MCF 10A (cell line): ENCODE measurements at regions of chr9 and their contacts with region 1.

Region 1: GRCh38 chr9:86098824-86099700 is at the start of gene GOLM1:
- DNase-seq: peak; percentile 56
- H3K4me3 Mint-ChIP-seq: peak within 1 kb of the TSS; percentile 82
- H3K27ac Mint-ChIP-seq: peak within 1 kb of the TSS; percentile 77
- H3K4me1 Mint-ChIP-seq: peaks cover 14% of the 10 kb centered on the region
- H3K27me3 Mint-ChIP-seq: no peaks in the 10 kb centered on the region
- CTCF ChIP-seq: no peak
- total RNA-seq, gene GOLM1: 32.7 and 33.9 TPM in 2 replicates

Region 2: GRCh38 chr9:86126998-86127972 is 28.2 kb after region 1 on chr9:
- CTCF ChIA-PET with region 1: interaction called, 6 read pairs
- POLR2A ChIA-PET with region 1: interaction called, 26 read pairs
- intact Hi-C with region 1: no loop called
- DNase-seq: peak; percentile 97
- H3K4me3 Mint-ChIP-seq: no peak overlapping the region
- H3K27ac Mint-ChIP-seq: peak overlapping the region; percentile 90
- H3K4me1 Mint-ChIP-seq: peaks cover 13% of the 10 kb centered on the region
- H3K27me3 Mint-ChIP-seq: no peaks in the 10 kb centered on the region
- CTCF ChIP-seq: no peak

Region 3: GRCh38 chr9:86176468-86176867 is 77.4 kb after region 1 on chr9:
- CTCF ChIA-PET with region 1: no interaction called
- POLR2A ChIA-PET with region 1: no interaction called
- intact Hi-C with region 1: loop called (anchors 5 kb)
- DNase-seq: peak; percentile 83
- H3K4me3 Mint-ChIP-seq: no peak overlapping the region
- H3K27ac Mint-ChIP-seq: no peak overlapping the region
- H3K4me1 Mint-ChIP-seq: peaks cover 16% of the 10 kb centered on the region
- H3K27me3 Mint-ChIP-seq: no peaks in the 10 kb centered on the region
- CTCF ChIP-seq: no peak